ENCODE measurements at regions of chr11 and their contacts with region 1.

Region 1: DNA sequence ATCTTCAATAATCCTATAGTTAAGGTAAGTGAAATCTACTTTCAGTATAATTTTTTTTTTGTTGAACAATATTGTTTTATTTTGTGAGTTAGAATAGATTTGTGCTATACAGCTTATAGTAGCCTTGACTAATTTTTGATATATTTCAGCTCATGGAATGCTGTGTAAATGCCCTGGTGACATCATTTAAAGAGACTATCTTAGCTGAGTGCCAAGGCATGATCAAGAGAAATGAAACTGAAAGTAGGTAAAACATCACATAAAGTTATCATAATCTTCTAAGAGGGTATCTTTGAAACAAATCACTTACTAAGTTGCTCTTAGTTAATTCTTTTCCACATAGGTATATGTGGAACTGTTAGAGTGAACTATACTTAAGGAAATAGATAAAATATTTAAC is 51.4 kb upstream of the ACAT1 start:
- DNase-seq: no peak

Region 2: DNA sequence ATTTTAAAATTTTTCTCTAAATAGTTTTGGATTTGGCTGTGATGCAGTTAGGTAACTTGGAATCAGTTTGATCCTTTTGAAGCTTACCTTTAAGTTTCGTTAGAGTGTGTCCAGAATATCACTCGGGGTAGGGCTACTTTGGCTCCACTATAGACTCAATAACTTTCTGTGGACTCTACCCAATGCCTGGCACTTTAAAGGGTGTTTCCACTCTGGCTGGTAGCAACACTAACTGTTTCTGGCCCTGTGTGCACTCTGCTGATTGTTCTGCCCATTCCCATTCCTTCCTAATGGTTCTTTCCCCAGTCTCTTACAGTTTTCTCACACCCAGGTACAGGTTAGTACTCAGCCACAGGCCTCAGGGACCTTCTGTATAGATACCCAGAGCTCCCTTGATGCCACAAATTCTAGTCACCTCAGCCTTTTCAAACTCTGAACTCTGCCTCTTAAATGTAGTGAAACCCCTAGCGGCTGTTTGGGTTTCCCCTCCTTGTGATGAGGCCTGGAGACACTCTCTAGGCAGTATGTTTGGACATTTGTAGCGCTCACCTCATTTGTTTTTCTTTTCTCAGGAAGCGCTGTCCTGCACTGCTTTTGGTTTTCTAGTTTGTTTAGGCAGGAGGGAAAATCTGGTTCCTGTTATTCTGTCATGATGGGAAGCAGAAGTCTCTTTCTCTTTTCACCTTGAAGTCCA is 44.4 kb before region 1 on chr11:
- intact Hi-C with region 1: loop called in 1 of 2 experiments (anchors 2 kb)
- DNase-seq: no peak

Measured in posterior vena cava (tissue), 2 donors.